ENCODE measurements at regions of chr15 and their contacts with region 1.

Region 1: DNA sequence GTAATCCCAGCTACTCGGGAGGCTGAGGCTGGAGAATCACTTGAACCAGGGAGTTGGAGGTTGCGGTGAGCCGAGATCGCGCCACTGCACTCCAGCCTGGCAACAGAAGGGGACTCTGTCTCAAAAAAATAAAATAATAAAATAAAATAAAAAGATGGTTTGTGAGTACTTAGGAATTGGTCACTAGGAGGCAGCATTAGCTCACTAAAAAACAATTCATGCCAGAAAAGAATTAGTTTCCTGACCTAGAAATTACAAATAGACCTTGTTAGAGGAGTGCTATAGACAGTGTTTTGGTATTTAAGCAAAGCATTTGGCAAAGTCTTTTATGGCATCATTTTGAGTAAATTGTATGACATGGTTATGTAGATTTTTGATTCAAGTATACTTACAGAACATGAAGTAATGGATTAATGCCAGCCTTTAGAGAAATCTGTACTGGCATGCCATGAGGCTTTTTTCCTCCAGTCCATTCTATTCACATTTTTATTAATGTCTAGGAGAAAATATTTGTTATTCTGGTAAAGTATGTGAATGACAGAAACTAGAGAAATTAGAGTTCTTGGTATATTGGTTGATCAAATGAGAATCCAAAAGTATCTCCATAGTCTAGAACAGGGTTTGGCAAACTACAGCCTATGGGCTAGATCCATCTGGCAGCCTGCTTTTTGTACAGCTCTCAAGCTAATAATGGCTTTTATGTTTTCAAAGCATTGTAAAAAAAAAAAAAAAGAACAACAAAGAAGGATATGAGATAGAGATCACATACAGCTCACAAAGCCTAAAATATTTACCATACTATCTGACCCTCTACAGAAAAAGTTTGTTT is 81.6 kb downstream of the LRRC49 start:
- DNase-seq: peak; percentile 45
- ATAC-seq: peak; percentile 44; the same call in 1 of the 2 replicates
- H3K4me3 ChIP-seq: no peak overlapping the region
- H3K27ac ChIP-seq: no peak overlapping the region
- H3K4me1 ChIP-seq: no peaks in the 10 kb centered on the region
- H3K27me3 ChIP-seq: no peaks in the 10 kb centered on the region
- CTCF ChIP-seq: peak; percentile 36 to 56 (median 39); a peak in 5 of 6 replicates
- POLR2A ChIP-seq: no peak
- RAD21 ChIP-seq: peak; percentile 73

Region 2: GRCh38 chr15:70947351-70948335 is 26.6 kb before region 1 on chr15:
- CTCF ChIA-PET with region 1: no interaction called
- POLR2A ChIA-PET with region 1: no interaction called
- RAD21 ChIA-PET with region 1: no interaction called
- intact Hi-C with region 1: no loop called
- DNase-seq: no peak
- ATAC-seq: no peak
- H3K4me3 ChIP-seq: no peak overlapping the region
- H3K27ac ChIP-seq: no peak overlapping the region
- H3K4me1 ChIP-seq: peaks cover 0 to 9% of the 10 kb centered on the region in 2 experiments; a peak in 2 of 4 replicates
- H3K27me3 ChIP-seq: no peaks in the 10 kb centered on the region
- CTCF ChIP-seq: no peak
- POLR2A ChIP-seq: no peak
- RAD21 ChIP-seq: no peak

Region 3: DNA sequence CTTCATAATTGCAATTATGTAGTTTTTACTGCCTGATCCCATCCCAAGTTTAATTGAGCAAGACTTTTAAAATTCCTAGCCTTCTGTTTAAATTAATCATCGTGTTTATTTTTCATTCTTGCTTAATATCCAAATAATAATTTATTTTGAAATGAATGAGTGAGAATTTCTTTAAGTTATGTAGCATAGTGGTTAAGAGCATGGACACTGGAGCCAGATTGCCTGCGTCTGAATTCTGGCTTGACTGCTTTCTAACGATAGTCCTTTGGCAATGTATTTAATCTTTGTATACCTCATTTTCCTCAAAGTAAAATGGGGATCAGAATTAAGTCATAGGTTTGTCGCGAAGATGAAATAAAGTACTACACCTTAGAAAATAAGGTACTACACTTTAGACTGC is 10.2 kb before region 1 on chr15:
- CTCF ChIA-PET with region 1: no interaction called
- POLR2A ChIA-PET with region 1: no interaction called
- RAD21 ChIA-PET with region 1: no interaction called
- intact Hi-C with region 1: no loop called
- DNase-seq: no peak
- ATAC-seq: no peak
- H3K4me3 ChIP-seq: no peak overlapping the region
- H3K27ac ChIP-seq: no peak overlapping the region
- H3K4me1 ChIP-seq: no peaks in the 10 kb centered on the region
- H3K27me3 ChIP-seq: no peaks in the 10 kb centered on the region
- CTCF ChIP-seq: no peak
- POLR2A ChIP-seq: no peak
- RAD21 ChIP-seq: no peak

Region 4: GRCh38 chr15:71103102-71103676 is 129.0 kb after region 1 on chr15:
- CTCF ChIA-PET with region 1: interaction called, 3 read pairs
- POLR2A ChIA-PET with region 1: no interaction called
- RAD21 ChIA-PET with region 1: no interaction called
- intact Hi-C with region 1: loop called (anchors 10 kb)
- DNase-seq: peak; percentile 50
- ATAC-seq: peak; percentile 99
- H3K4me3 ChIP-seq: no peak overlapping the region
- H3K27ac ChIP-seq: no peak overlapping the region
- H3K4me1 ChIP-seq: peaks cover 4 to 8% of the 10 kb centered on the region in 2 experiments; a peak in 1 of 4 replicates
- H3K27me3 ChIP-seq: no peaks in the 10 kb centered on the region
- CTCF ChIP-seq: peak; percentile 46 to 68 (median 65); a peak in 5 of 6 replicates
- POLR2A ChIP-seq: no peak
- RAD21 ChIP-seq: peak; percentile 48

Region 5: GRCh38 chr15:71294886-71295638 is 320.8 kb after region 1 on chr15:
- CTCF ChIA-PET with region 1: no interaction called
- POLR2A ChIA-PET with region 1: no interaction called
- RAD21 ChIA-PET with region 1: no interaction called
- intact Hi-C with region 1: loop called (anchors 10 kb)
- DNase-seq: peak; percentile 100
- ATAC-seq: peak; percentile 83
- H3K4me3 ChIP-seq: peak overlapping the region; percentile 1 to 51
- H3K27ac ChIP-seq: peak overlapping the region; percentile 97
- H3K4me1 ChIP-seq: peaks cover 49 to 65% of the 10 kb centered on the region in 2 experiments
- H3K27me3 ChIP-seq: no peaks in the 10 kb centered on the region
- CTCF ChIP-seq: no peak
- POLR2A ChIP-seq: no peak
- RAD21 ChIP-seq: peak; percentile 39; the same call in 1 of the 2 replicates

Region 6: GRCh38 chr15:71443538-71443937 is 469.3 kb after region 1 on chr15:
- CTCF ChIA-PET with region 1: interaction called, 15 read pairs
- POLR2A ChIA-PET with region 1: no interaction called
- RAD21 ChIA-PET with region 1: no interaction called
- intact Hi-C with region 1: loop called (anchors 2 kb)
- DNase-seq: no peak
- ATAC-seq: no peak
- H3K4me3 ChIP-seq: no peak overlapping the region
- H3K27ac ChIP-seq: no peak overlapping the region; the same call in 1 of the 2 replicates
- H3K4me1 ChIP-seq: peaks cover 58 to 68% of the 10 kb centered on the region in 2 experiments
- H3K27me3 ChIP-seq: no peaks in the 10 kb centered on the region
- CTCF ChIP-seq: peak; percentile 50 to 89 (median 84); a peak in 5 of 6 replicates
- POLR2A ChIP-seq: no peak
- RAD21 ChIP-seq: peak; percentile 37; the same call in 1 of the 2 replicates

Region 7: DNA sequence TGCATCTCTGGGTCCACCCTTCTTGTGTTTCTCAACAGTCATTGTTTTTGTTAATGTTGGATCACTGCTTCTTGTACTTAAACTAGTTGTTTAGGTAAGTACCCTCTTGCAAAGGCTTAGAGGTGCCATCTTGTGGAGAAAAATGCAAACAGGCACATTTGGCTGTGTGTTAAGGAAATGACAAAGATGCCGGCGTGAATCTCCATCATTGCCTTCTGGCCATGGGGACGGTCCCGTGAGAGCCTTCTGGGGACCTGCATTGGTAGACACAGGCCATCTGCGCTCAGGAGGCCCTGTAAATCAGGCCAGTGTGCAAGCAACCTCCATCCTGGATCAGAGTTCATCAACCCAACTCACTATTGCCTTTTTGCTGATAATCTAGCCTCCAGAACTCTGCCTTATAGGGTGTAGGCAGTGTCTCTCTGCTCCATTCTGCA is 677.5 kb after region 1 on chr15:
- CTCF ChIA-PET with region 1: interaction called, 3 read pairs
- POLR2A ChIA-PET with region 1: no interaction called
- RAD21 ChIA-PET with region 1: no interaction called
- intact Hi-C with region 1: loop called (anchors 2 kb)
- DNase-seq: peak; percentile 39
- ATAC-seq: peak; percentile 75
- H3K4me3 ChIP-seq: no peak overlapping the region
- H3K27ac ChIP-seq: no peak overlapping the region
- H3K4me1 ChIP-seq: no peaks in the 10 kb centered on the region
- H3K27me3 ChIP-seq: no peaks in the 10 kb centered on the region
- CTCF ChIP-seq: peak; percentile 47 to 58 (median 49); a peak in 5 of 6 replicates
- POLR2A ChIP-seq: no peak
- RAD21 ChIP-seq: peak; percentile 67

Region 8: DNA sequence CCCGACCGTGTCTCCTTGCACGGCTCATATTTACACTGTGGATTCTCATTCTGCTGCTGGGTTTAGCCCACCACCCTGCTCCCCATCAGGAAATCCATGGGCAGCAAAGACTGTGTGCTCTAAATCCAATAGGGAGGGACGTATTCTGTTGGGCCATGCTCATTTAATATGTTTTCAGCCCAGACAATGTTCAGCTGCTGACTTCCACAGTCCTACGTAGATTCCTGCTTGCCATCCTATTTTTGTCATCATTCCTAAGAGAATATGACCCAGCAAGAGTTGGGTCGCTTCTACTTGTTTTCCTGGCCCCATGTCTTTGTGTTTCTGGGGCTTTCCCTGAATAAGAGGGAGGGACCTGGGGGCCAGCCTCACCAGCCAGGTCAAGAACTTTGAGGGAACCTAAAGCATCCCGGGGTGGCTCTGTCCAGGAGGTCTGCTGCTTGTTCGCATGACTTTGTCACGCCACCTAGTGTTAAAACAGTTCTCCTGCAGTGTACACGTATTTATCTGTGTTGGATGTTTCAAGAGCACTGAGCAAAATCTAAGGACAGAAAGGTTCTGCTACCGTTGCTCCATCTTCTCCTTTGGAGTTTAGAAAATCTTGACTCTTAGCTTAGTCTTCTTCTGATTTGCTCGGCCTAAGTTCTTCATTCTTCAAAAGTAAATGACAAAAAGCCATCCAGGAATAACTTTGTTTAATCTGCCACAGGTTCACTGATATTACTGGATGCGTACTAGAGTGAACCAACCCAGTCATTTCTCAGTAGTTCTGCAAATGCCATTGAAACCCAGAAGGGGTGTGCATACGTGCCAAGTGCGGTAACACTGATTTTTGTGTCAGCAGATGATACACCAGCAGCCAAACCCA is 756.3 kb after region 1 on chr15:
- CTCF ChIA-PET with region 1: no interaction called
- POLR2A ChIA-PET with region 1: no interaction called
- RAD21 ChIA-PET with region 1: no interaction called
- intact Hi-C with region 1: loop called (anchors 5 kb)
- DNase-seq: peak; percentile 43
- ATAC-seq: peak; percentile 96
- H3K4me3 ChIP-seq: no peak overlapping the region
- H3K27ac ChIP-seq: no peak overlapping the region
- H3K4me1 ChIP-seq: no peaks in the 10 kb centered on the region
- H3K27me3 ChIP-seq: no peaks in the 10 kb centered on the region; the same call in 1 of the 2 replicates
- CTCF ChIP-seq: peak; percentile 70 to 82 (median 75)
- POLR2A ChIP-seq: no peak
- RAD21 ChIP-seq: peak; percentile 71

Region 9: GRCh38 chr15:72155635-72156616 is 1181.7 kb after region 1 on chr15:
- CTCF ChIA-PET with region 1: no interaction called
- POLR2A ChIA-PET with region 1: no interaction called
- RAD21 ChIA-PET with region 1: no interaction called
- intact Hi-C with region 1: loop called (anchors 5 kb)
- DNase-seq: peak; percentile 59
- ATAC-seq: peak; percentile 99
- H3K4me3 ChIP-seq: no peak overlapping the region
- H3K27ac ChIP-seq: no peak overlapping the region
- H3K4me1 ChIP-seq: peaks cover 4 to 12% of the 10 kb centered on the region in 2 experiments; a peak in 3 of 4 replicates
- H3K27me3 ChIP-seq: no peaks in the 10 kb centered on the region
- CTCF ChIP-seq: peak; percentile 74 to 92 (median 84); a peak in 5 of 6 replicates
- POLR2A ChIP-seq: no peak
- RAD21 ChIP-seq: peak; percentile 95

Measured in HCT116 (cell line).